ENCODE measurements at regions of chr14 and their contacts with region 1.

Region 1: DNA sequence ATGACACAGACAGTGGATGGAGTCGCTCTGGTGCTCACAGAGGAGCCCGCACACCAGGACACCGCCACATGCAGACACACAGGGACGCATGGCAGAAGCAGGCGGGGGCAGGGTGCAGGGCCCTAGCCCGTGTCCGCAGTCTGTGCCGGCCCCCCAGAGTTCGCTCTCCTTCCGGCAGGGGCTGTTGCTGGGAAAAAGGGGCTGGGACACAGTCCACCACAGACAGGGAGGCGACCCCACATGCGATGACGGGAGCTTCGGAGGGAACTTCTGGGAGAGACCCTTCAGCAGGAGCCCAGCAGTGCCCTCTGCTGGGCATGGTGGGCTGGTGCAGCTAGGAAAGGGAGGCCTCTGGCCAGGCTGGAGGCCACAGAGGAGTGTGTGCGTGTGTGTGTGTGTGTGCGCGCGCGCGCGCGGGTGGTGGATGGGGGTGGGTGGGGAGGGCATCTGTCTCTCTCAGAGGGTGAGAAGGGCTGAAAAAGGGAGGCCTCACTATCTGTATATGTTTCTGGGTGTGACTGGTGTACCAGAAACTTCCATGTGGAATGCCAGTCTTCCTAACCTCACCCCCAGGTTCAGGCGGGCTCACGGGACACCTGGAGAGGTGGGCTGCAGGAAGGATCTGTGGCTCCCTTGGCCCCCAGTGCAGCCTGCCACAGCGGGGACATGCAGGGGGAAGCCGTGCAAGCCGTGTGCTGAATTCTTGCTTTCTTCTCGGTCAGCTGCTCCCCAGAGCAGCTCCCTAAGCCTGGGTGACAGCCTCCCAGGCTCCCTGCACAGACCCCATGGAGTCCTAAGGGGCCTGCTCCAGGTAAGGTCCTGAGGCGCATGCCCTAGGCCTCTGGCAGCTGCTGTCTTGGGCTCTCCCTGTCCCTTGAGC is 60.7 kb downstream of the PLEKHG3 start:
- DNase-seq: peak; percentile 66 to 78 (median 70)
- H3K4me3 ChIP-seq: no peak overlapping the region
- H3K4me3 Mint-ChIP-seq: peak overlapping the region; percentile 65 to 81 (median 72)
- H3K27ac ChIP-seq: no peak overlapping the region
- H3K27ac Mint-ChIP-seq: peak overlapping the region; percentile 74 to 90 (median 85)
- H3K4me1 ChIP-seq: peaks cover 60% of the 10 kb centered on the region
- H3K4me1 Mint-ChIP-seq: peaks cover 48 to 66% (median 58%) of the 10 kb centered on the region in 4 donors
- H3K27me3 ChIP-seq: no peaks in the 10 kb centered on the region
- H3K27me3 Mint-ChIP-seq: no peaks in the 10 kb centered on the region

Region 2: GRCh38 chr14:64671591-64671990 is 93.3 kb before region 1 on chr14:
- CTCF ChIA-PET with region 1: interaction called, 132 read pairs
- POLR2A ChIA-PET with region 1: interaction called, 26 read pairs
- intact Hi-C with region 1: loop called (anchors 1 kb)
- DNase-seq: peak; percentile 44 to 77 (median 71)
- H3K4me3 ChIP-seq: no peak overlapping the region
- H3K4me3 Mint-ChIP-seq: no peak overlapping the region
- H3K27ac ChIP-seq: no peak overlapping the region
- H3K27ac Mint-ChIP-seq: peak overlapping the region in 6 of 7 donors; percentile 11 to 79 (median 64)
- H3K4me1 ChIP-seq: peaks cover 37% of the 10 kb centered on the region
- H3K4me1 Mint-ChIP-seq: peaks cover 30 to 38% (median 33%) of the 10 kb centered on the region in 4 donors
- H3K27me3 ChIP-seq: no peaks in the 10 kb centered on the region
- H3K27me3 Mint-ChIP-seq: no peaks in the 10 kb centered on the region

Region 3: GRCh38 chr14:64688811-64689281 is 76.0 kb before region 1 on chr14:
- CTCF ChIA-PET with region 1: interaction called, 14 read pairs
- POLR2A ChIA-PET with region 1: interaction called, 8 read pairs
- intact Hi-C with region 1: no loop called
- DNase-seq: peak in 1 of 5 donors; percentile 48
- H3K4me3 ChIP-seq: no peak overlapping the region
- H3K4me3 Mint-ChIP-seq: peak overlapping the region in 7 of 8 donors; percentile 52 to 77 (median 71)
- H3K27ac ChIP-seq: no peak overlapping the region
- H3K27ac Mint-ChIP-seq: peak overlapping the region in 6 of 7 donors; percentile 49 to 87 (median 70)
- H3K4me1 ChIP-seq: peaks cover 29% of the 10 kb centered on the region
- H3K4me1 Mint-ChIP-seq: peaks cover 31 to 64% (median 44%) of the 10 kb centered on the region in 4 donors
- H3K27me3 ChIP-seq: no peaks in the 10 kb centered on the region
- H3K27me3 Mint-ChIP-seq: no peaks in the 10 kb centered on the region

Region 4: DNA sequence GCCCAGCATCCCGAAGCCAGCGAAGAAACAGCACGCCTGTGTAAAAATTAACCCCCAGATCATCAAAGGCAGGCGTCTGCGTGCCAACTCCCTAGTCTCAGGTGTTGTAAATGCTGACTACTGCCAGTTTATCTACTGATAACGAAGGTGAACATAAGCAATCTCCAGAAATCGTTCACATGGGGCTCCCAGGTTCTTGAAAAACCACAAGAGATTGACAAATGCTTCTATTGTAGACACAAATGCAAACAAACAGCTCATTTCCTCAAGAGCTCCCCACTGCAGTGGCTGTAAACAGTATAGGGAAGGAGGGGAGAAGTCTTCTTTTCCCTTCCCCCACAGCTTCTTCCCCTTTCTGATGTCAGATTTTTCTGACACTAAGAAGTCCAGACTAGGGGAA is 66.0 kb before region 1 on chr14:
- CTCF ChIA-PET with region 1: interaction called, 17 read pairs
- POLR2A ChIA-PET with region 1: interaction called, 108 read pairs
- intact Hi-C with region 1: no loop called
- DNase-seq: peak in 4 of 5 donors; percentile 37 to 59 (median 50)
- H3K4me3 ChIP-seq: no peak overlapping the region
- H3K4me3 Mint-ChIP-seq: peak overlapping the region; percentile 11 to 80 (median 60)
- H3K27ac ChIP-seq: peak overlapping the region; percentile 7
- H3K27ac Mint-ChIP-seq: peak overlapping the region; percentile 48 to 95 (median 86)
- H3K4me1 ChIP-seq: peaks cover 89% of the 10 kb centered on the region
- H3K4me1 Mint-ChIP-seq: peaks cover 53 to 88% (median 64%) of the 10 kb centered on the region in 4 donors
- H3K27me3 ChIP-seq: no peaks in the 10 kb centered on the region
- H3K27me3 Mint-ChIP-seq: no peaks in the 10 kb centered on the region

Region 5: DNA sequence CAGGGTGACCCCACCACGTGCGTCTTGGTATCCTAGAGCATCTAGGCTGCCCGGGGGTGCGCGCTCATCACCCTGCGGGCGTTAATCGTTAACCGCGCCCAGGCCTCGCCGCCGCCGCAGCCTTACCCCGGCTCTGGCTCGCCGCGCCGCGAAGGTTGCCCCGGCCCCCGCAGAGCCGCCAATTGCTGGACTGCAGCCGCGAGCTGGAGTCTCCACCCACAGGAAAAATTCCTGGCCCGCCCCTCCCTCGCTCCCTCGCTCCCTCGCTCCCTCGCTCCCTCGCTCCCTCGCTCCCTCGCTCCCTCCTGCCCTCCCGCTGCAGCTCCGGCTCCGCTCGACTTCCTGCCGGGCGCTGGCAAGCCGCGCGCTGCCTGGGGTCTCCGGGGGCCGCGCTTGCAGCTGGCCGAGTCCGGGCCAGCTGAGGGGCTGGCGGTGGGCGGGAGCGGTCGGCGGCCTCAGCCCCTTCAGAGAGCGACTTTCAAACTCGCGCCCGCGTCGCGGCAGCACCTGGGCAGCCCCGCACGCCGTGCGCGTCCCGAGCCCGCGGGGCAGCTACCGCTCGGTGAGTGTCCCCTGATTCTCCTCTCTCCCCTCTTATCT is 60.6 kb before region 1 on chr14 and contains the start of gene PLEKHG3:
- CTCF ChIA-PET with region 1: interaction called, 17 read pairs
- POLR2A ChIA-PET with region 1: interaction called, 108 read pairs
- intact Hi-C with region 1: no loop called
- DNase-seq: peak in 4 of 5 donors; percentile 35 to 76 (median 42)
- H3K4me3 ChIP-seq: peak within 1 kb of the TSS; percentile 57 to 74
- H3K4me3 Mint-ChIP-seq: peak within 1 kb of the TSS; percentile 90 to 95 (median 94)
- H3K27ac ChIP-seq: peak within 1 kb of the TSS; percentile 80
- H3K27ac Mint-ChIP-seq: peak within 1 kb of the TSS; percentile 86 to 98 (median 93)
- H3K4me1 ChIP-seq: peaks cover 80% of the 10 kb centered on the region
- H3K4me1 Mint-ChIP-seq: peaks cover 42 to 83% (median 58%) of the 10 kb centered on the region in 4 donors
- H3K27me3 ChIP-seq: no peaks in the 10 kb centered on the region
- H3K27me3 Mint-ChIP-seq: no peaks in the 10 kb centered on the region
- total RNA-seq, gene PLEKHG3: 53.3 to 56.5 TPM

Region 6: GRCh38 chr14:64745511-64746091 is 19.3 kb before region 1 on chr14:
- CTCF ChIA-PET with region 1: interaction called, 11 read pairs
- POLR2A ChIA-PET with region 1: interaction called, 4 read pairs
- intact Hi-C with region 1: no loop called
- DNase-seq: no peak
- H3K4me3 ChIP-seq: no peak overlapping the region
- H3K4me3 Mint-ChIP-seq: peak overlapping the region in 7 of 8 donors; percentile 12 to 75 (median 43)
- H3K27ac ChIP-seq: peak overlapping the region; percentile 28
- H3K27ac Mint-ChIP-seq: peak overlapping the region; percentile 71 to 93 (median 85)
- H3K4me1 ChIP-seq: peaks cover 29% of the 10 kb centered on the region
- H3K4me1 Mint-ChIP-seq: peaks cover 30 to 52% (median 38%) of the 10 kb centered on the region in 4 donors
- H3K27me3 ChIP-seq: no peaks in the 10 kb centered on the region
- H3K27me3 Mint-ChIP-seq: no peaks in the 10 kb centered on the region

Region 7: GRCh38 chr14:64841121-64841651 is 76.3 kb after region 1 on chr14:
- CTCF ChIA-PET with region 1: no interaction called
- POLR2A ChIA-PET with region 1: no interaction called
- intact Hi-C with region 1: no loop called
- DNase-seq: no peak
- H3K4me3 ChIP-seq: no peak overlapping the region
- H3K4me3 Mint-ChIP-seq: no peak overlapping the region
- H3K27ac ChIP-seq: no peak overlapping the region
- H3K27ac Mint-ChIP-seq: no peak overlapping the region
- H3K4me1 ChIP-seq: no peaks in the 10 kb centered on the region
- H3K4me1 Mint-ChIP-seq: no peaks in the 10 kb centered on the region
- H3K27me3 ChIP-seq: no peaks in the 10 kb centered on the region
- H3K27me3 Mint-ChIP-seq: peaks cover 37 to 46% of the 10 kb centered on the region in 2 donors